ENCODE measurements at regions of chr9 and their contacts with region 1.

Region 1: DNA sequence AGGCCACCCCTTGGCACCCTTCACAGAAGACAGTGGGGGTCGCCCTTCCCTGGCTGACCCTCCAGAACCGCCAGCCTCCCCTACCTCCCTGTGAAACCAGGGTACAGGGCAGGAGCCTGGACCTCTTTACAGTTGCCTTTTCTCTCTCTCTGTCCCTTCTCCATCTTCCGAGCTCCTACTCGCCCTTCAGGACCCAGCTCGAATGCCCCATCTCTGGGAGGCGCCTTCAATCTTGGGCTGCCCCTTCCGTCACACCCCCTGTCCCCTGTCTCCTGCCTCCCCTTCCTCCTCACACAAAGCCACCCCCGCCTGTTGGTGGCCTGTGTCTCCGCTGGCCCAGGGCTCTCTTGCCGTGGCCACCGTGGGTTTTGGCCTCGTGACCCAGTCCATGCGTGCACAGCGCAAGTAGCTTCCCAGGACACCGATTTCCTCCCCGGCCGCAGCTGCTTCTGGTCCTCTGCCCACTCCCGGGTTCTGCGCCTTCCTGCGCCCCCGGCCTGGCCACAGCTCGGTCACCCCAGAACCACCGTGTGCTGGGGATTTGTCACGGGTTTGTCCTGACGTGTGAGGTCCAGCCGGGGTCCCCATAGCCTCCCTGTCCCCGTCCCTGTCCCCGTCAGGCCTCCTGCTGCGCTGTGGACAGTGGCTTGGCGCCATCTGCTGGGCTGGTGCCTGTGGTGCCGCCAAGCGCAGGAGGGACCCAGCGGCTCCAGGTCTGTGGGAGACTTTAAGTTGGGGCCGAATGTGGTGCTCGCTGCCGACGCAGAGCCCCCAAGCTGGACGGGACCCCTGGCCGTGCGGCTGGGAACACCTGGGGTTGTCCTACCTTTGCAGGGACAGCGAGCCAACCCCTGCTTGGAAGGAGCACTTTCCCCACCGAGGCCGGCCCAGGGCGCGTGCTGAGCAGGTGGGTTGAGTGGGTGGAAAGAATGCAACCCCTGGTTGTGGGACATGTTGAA is 4.0 kb upstream of the TMEM250 start:
- DNase-seq: peak; percentile 71
- H3K4me3 ChIP-seq: no peak overlapping the region
- H3K27ac ChIP-seq: no peak overlapping the region
- H3K4me1 ChIP-seq: peaks cover 12% of the 10 kb centered on the region
- H3K27me3 ChIP-seq: peaks cover 3% of the 10 kb centered on the region
- CTCF ChIP-seq: peak; percentile 92

Region 2: DNA sequence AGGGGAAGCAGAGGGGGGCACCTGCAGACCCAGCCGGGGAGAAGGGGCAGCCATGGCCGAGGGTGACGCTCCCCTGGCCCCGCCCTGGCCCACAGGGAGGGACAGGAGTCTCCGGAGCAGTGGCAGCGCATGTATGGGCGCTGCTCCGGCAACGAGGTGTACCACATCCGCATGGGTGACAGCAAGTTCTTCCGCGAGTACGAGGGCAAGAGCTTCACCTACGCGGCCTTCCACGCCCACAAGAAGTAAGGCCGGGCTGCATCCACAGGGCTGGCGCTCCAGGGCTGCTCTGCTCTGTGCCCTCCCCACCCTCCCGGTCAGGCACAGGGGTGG is 352.5 kb before region 1 on chr9:
- intact Hi-C with region 1: no loop called
- DNase-seq: no peak
- H3K4me3 ChIP-seq: no peak overlapping the region
- H3K27ac ChIP-seq: no peak overlapping the region
- H3K4me1 ChIP-seq: no peaks in the 10 kb centered on the region
- H3K27me3 ChIP-seq: no peaks in the 10 kb centered on the region
- CTCF ChIP-seq: no peak

Region 3: DNA sequence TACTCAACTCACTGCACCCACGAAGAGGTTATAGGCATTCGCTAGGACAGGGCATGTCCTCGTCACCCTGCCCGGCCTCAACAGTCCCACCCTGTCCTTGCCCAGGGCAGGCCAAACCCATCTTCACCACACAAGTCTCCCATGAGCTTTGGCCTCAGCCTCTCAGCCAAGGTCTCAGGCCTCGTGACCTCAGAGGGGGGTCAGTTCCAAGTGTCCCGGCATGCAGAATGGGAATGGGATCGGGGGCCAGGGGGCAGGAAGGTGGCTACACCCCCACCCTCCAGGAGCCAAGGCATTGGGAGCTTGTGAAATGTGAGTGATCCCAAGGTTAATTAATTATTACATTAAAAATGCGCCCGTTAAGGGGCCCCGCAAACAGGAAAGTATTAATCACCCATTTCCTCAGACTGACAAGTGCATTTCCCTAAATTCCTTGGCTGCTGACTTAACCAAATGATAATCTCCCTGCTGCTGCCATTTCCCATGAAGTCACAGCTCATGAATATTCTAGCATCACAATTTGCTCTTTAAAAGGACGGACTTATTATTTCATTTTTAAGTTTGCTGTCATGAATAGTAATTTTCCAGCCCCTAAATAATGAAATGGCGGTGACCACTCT is 153.5 kb before region 1 on chr9:
- intact Hi-C with region 1: loop called (anchors 2 kb)
- DNase-seq: no peak
- H3K4me3 ChIP-seq: no peak overlapping the region
- H3K27ac ChIP-seq: no peak overlapping the region
- H3K4me1 ChIP-seq: no peaks in the 10 kb centered on the region
- H3K27me3 ChIP-seq: no peaks in the 10 kb centered on the region
- CTCF ChIP-seq: no peak